ENCODE measurements at regions of chr3 and their contacts with region 1.

Region 1: DNA sequence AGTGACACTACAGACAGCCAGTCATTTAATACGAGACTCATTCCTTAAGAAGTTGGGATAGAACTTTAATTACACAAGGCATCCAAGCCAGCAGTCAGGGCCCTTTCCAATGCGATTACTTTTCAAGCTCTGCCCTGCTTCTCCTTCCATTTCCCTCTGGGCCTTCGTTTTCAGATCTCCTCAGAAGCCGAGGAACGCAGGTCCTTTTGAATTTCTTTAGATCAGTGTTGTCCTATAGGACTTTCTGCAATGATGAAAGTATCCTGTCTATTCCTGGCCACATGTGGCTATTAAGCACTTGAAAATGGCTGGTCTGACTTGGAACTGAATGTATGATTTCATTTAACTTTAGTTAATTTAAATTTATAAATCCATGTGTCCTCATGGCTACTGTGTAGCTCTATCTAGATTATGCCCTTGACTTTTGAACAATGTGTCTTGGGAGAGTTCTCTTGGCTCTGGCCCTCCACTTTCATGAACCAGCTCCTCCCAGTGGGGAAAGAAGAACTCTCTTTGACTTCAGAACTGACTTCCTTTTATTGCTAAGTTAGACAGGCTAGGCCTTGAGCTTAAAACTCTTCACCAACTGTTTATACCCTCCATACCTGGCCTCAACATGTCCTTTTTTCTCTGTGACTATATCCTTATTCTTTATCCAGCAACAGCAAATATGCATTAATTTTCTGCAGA is 22.6 kb downstream of the TGFBR2 start:
- DNase-seq: peak in 4 of 5 donors; percentile 38 to 54 (median 44)
- H3K4me3 ChIP-seq: no peak overlapping the region
- H3K4me3 Mint-ChIP-seq: peak overlapping the region in 7 of 8 donors; percentile 55 to 82 (median 64)
- H3K27ac ChIP-seq: peak overlapping the region; percentile 60
- H3K27ac Mint-ChIP-seq: peak overlapping the region; percentile 89 to 97 (median 94)
- H3K4me1 ChIP-seq: peaks cover 99% of the 10 kb centered on the region
- H3K4me1 Mint-ChIP-seq: peaks cover 71 to 98% (median 84%) of the 10 kb centered on the region in 4 donors
- H3K27me3 ChIP-seq: no peaks in the 10 kb centered on the region
- H3K27me3 Mint-ChIP-seq: no peaks in the 10 kb centered on the region

Region 2: GRCh38 chr3:30042274-30042859 is 586.7 kb before region 1 on chr3:
- CTCF ChIA-PET with region 1: no interaction called
- POLR2A ChIA-PET with region 1: no interaction called
- intact Hi-C with region 1: loop called (anchors 2 kb)
- DNase-seq: peak; percentile 43 to 55 (median 44)
- H3K4me3 ChIP-seq: no peak overlapping the region
- H3K4me3 Mint-ChIP-seq: no peak overlapping the region
- H3K27ac ChIP-seq: no peak overlapping the region
- H3K27ac Mint-ChIP-seq: no peak overlapping the region
- H3K4me1 ChIP-seq: no peaks in the 10 kb centered on the region
- H3K4me1 Mint-ChIP-seq: no peaks in the 10 kb centered on the region
- H3K27me3 ChIP-seq: peaks cover 2% of the 10 kb centered on the region
- H3K27me3 Mint-ChIP-seq: peaks cover 24 to 26% of the 10 kb centered on the region in 2 donors

Region 3: DNA sequence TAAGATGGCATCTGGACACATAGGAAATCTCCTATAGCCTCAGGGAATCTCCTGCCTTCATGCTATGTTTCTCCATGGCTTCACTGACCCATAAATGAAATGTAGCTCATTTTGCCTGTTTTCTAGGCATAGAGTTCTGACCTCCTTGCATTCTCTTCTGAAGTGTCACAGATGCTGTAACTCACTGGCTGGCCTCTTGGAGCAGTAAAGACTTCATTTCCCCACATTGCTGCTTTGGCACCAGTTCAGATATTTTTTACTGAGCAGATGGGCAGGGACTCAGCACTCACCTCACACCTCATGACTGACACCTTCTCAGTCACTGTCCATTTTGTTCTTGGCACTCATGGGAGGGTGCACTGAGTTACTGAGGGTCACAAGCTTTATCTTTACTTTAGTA is 309.3 kb before region 1 on chr3:
- CTCF ChIA-PET with region 1: interaction called, 9 read pairs
- POLR2A ChIA-PET with region 1: interaction called, 4 read pairs
- intact Hi-C with region 1: loop called (anchors 2 kb)
- DNase-seq: peak; percentile 45 to 54 (median 49)
- H3K4me3 ChIP-seq: no peak overlapping the region
- H3K4me3 Mint-ChIP-seq: no peak overlapping the region
- H3K27ac ChIP-seq: no peak overlapping the region
- H3K27ac Mint-ChIP-seq: peak overlapping the region in 1 of 7 donors; percentile 9
- H3K4me1 ChIP-seq: no peaks in the 10 kb centered on the region
- H3K4me1 Mint-ChIP-seq: peaks cover 3 to 8% (median 5%) of the 10 kb centered on the region in 4 donors
- H3K27me3 ChIP-seq: no peaks in the 10 kb centered on the region
- H3K27me3 Mint-ChIP-seq: no peaks in the 10 kb centered on the region

Region 4: DNA sequence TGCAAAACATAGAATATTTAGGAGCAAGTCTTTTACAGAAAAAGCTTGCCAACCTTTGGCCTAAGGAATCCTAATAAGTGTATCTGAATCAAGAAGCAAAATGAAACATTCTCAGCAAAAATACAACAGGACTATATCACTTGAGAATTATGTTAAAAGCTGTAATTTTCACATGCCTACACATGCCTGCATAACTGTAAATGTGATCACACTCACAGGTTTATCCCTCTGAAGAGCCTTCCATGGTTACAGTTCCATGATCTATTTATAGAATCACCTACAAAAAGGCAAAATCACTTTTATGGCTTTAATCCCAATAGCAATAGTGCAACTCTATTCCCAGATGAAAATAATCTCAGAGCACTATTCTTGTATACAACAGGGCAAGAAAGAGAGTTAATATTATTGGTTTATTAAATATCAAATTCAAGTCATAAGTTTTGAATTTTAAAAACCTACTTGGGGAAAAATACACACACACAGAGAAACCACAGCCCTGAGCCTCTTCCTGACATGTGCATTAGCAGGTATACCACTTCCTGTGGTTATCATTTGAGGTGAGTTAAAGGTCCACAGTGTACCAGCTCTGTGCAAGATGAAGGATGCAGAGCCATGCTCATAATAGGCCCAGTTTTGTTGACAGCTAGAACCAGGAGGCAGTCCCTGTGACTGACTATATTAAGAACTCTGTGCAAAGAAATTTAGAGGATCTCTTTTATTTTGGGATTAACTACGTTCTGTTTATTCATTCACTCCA is 275.2 kb before region 1 on chr3:
- CTCF ChIA-PET with region 1: interaction called, 10 read pairs
- POLR2A ChIA-PET with region 1: interaction called, 5 read pairs
- intact Hi-C with region 1: loop called (anchors 1 kb)
- DNase-seq: peak; percentile 82 to 91 (median 86)
- H3K4me3 ChIP-seq: peak overlapping the region in 1 of 2 donors; percentile 33
- H3K4me3 Mint-ChIP-seq: peak overlapping the region; percentile 13 to 81 (median 64)
- H3K27ac ChIP-seq: no peak overlapping the region
- H3K27ac Mint-ChIP-seq: peak overlapping the region; percentile 29 to 79 (median 69)
- H3K4me1 ChIP-seq: peaks cover 67% of the 10 kb centered on the region
- H3K4me1 Mint-ChIP-seq: peaks cover 50 to 79% (median 63%) of the 10 kb centered on the region in 4 donors
- H3K27me3 ChIP-seq: no peaks in the 10 kb centered on the region
- H3K27me3 Mint-ChIP-seq: peaks cover under 1 to 5% of the 10 kb centered on the region in 2 donors

Region 5: DNA sequence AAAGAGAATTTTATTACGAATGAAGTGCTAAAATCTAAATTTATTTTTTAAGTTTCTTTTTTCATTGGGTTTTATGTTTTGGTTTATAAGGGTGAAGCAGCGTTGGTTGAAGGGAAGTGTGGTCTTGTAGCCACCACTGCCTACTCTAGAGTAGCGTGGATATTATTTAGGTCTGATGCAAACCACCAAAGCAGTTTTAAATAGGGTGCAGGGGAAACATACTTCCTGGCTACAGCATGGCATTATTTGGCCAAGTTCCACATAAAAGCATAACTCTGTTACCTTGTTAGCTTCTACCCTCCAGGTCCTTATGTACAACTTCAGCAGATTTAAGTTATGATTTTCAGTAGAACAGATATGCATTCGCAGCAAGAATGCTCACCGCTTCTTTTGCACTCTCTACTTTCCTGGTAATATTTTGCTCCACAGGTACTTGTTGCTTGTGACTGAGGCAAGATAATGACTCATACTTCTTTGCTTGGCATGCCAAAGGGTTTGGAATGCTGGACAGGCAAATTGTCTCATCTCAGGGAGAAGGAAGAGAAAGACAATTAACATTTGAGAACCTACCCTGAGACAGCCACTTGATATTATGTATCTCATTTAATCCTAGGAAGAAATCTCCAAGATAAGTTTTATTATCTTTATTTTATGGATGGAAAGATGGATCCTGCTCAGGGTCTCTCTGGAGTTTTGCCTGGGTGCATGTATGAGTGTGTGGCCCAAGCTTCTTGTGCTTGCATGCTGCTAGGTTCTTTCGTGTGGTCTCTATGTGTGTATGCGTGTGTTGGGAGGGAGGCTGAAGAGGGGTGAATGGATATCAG is 17.2 kb before region 1 on chr3:
- CTCF ChIA-PET with region 1: interaction called, 75 read pairs
- POLR2A ChIA-PET with region 1: interaction called, 290 read pairs
- intact Hi-C with region 1: loop called (anchors 1 kb)
- DNase-seq: peak in 4 of 5 donors; percentile 47 to 57 (median 50)
- H3K4me3 ChIP-seq: peak overlapping the region in 1 of 2 donors; percentile 14
- H3K4me3 Mint-ChIP-seq: peak overlapping the region; percentile 90 to 99 (median 98)
- H3K27ac ChIP-seq: peak overlapping the region; percentile 72
- H3K27ac Mint-ChIP-seq: peak overlapping the region; percentile 88 to 96 (median 93)
- H3K4me1 ChIP-seq: peaks cover 75% of the 10 kb centered on the region
- H3K4me1 Mint-ChIP-seq: peaks cover 66 to 84% (median 70%) of the 10 kb centered on the region in 4 donors
- H3K27me3 ChIP-seq: no peaks in the 10 kb centered on the region
- H3K27me3 Mint-ChIP-seq: no peaks in the 10 kb centered on the region

Region 6: DNA sequence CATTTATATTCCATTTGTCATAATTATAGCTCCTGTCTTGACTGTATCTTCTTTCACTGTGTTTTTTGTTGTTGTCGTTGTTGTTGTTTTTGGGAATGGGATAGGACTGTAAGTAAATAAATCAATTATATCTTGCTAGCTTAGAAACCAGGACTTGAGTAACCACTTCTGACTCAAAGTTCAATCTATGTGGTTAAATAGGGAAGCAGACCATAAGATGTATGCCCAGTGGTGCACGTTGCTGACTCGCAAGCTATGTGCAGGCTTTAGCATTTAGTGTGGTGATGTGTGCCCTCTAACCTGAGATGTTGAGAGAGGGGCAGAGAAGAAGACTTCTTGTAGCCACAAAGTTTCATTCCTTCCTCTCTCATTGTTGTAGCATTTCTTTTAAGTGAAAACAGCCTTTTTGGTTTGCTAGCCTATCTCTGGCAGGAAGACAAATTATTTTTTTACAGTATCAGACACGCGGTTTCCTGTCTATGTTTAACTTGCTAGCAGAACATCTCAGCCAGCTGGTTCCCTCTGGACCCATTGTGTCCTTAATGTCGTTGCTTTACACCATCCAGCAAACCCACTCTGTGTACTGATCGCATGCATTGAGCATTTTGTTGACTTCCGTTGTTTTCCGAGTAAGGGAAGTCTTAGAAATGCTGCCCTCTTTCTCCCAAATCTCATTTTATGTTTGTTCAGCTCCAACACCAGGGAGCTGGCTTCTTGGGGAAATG is 29.4 kb after region 1 on chr3:
- CTCF ChIA-PET with region 1: interaction called, 13 read pairs
- POLR2A ChIA-PET with region 1: interaction called, 580 read pairs
- intact Hi-C with region 1: loop called (anchors 1 kb)
- DNase-seq: peak; percentile 68 to 77 (median 70)
- H3K4me3 ChIP-seq: peak overlapping the region; percentile 3 to 5
- H3K4me3 Mint-ChIP-seq: peak overlapping the region; percentile 62 to 87 (median 72)
- H3K27ac ChIP-seq: peak overlapping the region; percentile 80
- H3K27ac Mint-ChIP-seq: peak overlapping the region; percentile 90 to 98 (median 94)
- H3K4me1 ChIP-seq: peaks cover 100% of the 10 kb centered on the region
- H3K4me1 Mint-ChIP-seq: peaks cover 76 to 99% (median 90%) of the 10 kb centered on the region in 4 donors
- H3K27me3 ChIP-seq: no peaks in the 10 kb centered on the region
- H3K27me3 Mint-ChIP-seq: no peaks in the 10 kb centered on the region